B cell (primary cell): ENCODE measurements at regions of chr1 and their contacts with region 1.

Region 1: DNA sequence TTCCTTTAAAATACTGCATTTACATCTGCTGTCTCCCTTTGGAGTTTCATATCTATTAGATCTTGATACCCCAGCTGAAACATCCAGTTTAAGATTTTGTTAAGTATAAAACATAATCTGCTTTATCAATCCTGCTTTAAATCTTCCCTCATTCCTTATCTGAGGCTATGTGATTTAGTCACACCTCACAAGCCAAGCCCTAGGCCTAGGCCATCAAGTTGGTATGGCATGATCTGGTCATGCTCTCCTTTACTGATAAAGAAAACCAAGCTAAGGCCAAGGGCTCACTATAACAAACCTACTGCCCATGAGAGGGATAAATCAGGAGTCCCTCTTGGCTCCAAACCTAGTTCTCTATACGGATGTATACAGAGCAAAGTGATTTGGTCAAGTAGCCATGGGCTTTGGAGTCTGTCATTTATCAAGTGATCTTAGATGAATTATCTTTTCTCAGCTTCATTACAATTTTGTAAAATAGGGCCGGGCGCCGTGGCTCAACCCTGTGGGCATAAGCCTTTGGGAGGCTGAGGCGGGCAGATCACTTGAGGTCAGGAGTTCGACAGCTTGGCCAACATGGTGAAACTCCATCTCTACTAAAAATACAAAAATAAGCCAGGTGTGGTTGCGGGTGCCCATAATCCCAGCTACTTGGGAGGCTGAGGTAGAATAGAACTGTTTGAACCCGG is 22.8 kb downstream of the ENSA start:
- DNase-seq: no peak
- ATAC-seq: no peak
- H3K4me3 ChIP-seq: no peak overlapping the region
- H3K4me3 Mint-ChIP-seq: no peak overlapping the region
- H3K27ac ChIP-seq: no peak overlapping the region
- H3K27ac Mint-ChIP-seq: no peak overlapping the region
- H3K4me1 ChIP-seq: peaks cover 10 to 13% of the 10 kb centered on the region in 2 donors
- H3K4me1 Mint-ChIP-seq: peaks cover 9% of the 10 kb centered on the region
- H3K27me3 ChIP-seq: no peaks in the 10 kb centered on the region
- H3K27me3 Mint-ChIP-seq: no peaks in the 10 kb centered on the region
- CTCF ChIP-seq: no peak

Region 2: DNA sequence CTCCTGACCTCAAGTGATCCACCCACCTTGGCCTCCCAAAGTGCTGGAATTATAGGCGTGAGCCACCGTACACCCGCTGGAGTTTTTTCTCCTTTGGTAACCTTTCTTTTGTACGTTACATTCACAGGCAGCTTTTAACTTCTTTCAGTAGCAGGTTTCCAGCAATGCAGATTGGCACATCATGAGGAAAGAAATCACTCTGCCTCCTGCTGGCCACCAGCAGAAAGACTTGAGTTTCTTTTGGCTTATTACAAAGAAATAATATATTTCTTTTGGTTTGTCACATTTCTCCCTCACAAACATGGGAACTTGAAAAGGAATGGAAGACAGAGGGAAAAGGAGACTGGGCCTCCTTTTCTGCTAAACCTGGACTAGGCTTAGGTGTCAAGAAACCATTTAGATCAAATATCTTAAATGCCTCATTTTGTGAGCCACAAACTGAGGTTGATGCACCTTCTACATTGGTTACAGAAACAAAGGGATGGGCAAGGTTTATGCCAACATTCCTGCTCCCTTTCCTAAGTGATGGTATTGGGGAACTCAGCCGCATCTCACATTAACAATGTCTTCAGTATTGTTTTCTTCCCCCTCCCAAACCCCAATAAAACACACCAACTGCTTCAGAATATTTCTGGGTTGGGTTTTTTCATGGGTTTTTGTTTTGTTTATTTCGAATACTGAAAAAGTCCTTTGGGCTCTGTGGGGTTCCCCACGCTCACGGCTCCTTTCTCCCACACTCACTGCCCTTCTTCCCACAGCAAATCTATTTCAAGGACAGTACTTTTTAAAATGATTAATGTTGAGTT is 15.1 kb after region 1 on chr1:
- CTCF ChIA-PET with region 1: interaction called, 15 read pairs
- POLR2A ChIA-PET with region 1: interaction called, 3 read pairs
- intact Hi-C with region 1: no loop called
- DNase-seq: peak; percentile 77
- ATAC-seq: peak; percentile 63
- H3K4me3 ChIP-seq: no peak overlapping the region
- H3K4me3 Mint-ChIP-seq: no peak overlapping the region
- H3K27ac ChIP-seq: peak overlapping the region; percentile 31 to 74
- H3K27ac Mint-ChIP-seq: peak overlapping the region; percentile 80
- H3K4me1 ChIP-seq: peaks cover 24 to 31% of the 10 kb centered on the region in 2 donors
- H3K4me1 Mint-ChIP-seq: peaks cover 30% of the 10 kb centered on the region
- H3K27me3 ChIP-seq: no peaks in the 10 kb centered on the region
- H3K27me3 Mint-ChIP-seq: no peaks in the 10 kb centered on the region
- CTCF ChIP-seq: peak; percentile 87

Region 3: GRCh38 chr1:150688786-150689185 is 82.2 kb after region 1 on chr1:
- CTCF ChIA-PET with region 1: no interaction called
- POLR2A ChIA-PET with region 1: no interaction called
- intact Hi-C with region 1: no loop called
- DNase-seq: no peak
- ATAC-seq: no peak
- H3K4me3 ChIP-seq: no peak overlapping the region
- H3K4me3 Mint-ChIP-seq: no peak overlapping the region
- H3K27ac ChIP-seq: no peak overlapping the region
- H3K27ac Mint-ChIP-seq: peak overlapping the region; percentile 0
- H3K4me1 ChIP-seq: peaks cover 8 to 9% of the 10 kb centered on the region in 2 donors
- H3K4me1 Mint-ChIP-seq: peaks cover 12% of the 10 kb centered on the region
- H3K27me3 ChIP-seq: no peaks in the 10 kb centered on the region
- H3K27me3 Mint-ChIP-seq: no peaks in the 10 kb centered on the region
- CTCF ChIP-seq: no peak

Region 4: GRCh38 chr1:151783424-151784195 is 1177.0 kb after region 1 on chr1:
- CTCF ChIA-PET with region 1: no interaction called
- POLR2A ChIA-PET with region 1: no interaction called
- intact Hi-C with region 1: no loop called
- DNase-seq: no peak
- ATAC-seq: no peak
- H3K4me3 ChIP-seq: no peak overlapping the region
- H3K4me3 Mint-ChIP-seq: no peak overlapping the region
- H3K27ac ChIP-seq: no peak overlapping the region
- H3K27ac Mint-ChIP-seq: no peak overlapping the region
- H3K4me1 ChIP-seq: no peaks in the 10 kb centered on the region
- H3K4me1 Mint-ChIP-seq: no peaks in the 10 kb centered on the region
- H3K27me3 ChIP-seq: no peaks in the 10 kb centered on the region
- H3K27me3 Mint-ChIP-seq: no peaks in the 10 kb centered on the region
- CTCF ChIP-seq: no peak